GM10248 (cell line): ENCODE measurements at regions of chr2 and their contacts with region 1.

Region 1: GRCh38 chr2:64730551-64731262 is 77.0 kb upstream of the SERTAD2 start:
- DNase-seq: no peak
- CTCF ChIP-seq: no peak

Region 2: DNA sequence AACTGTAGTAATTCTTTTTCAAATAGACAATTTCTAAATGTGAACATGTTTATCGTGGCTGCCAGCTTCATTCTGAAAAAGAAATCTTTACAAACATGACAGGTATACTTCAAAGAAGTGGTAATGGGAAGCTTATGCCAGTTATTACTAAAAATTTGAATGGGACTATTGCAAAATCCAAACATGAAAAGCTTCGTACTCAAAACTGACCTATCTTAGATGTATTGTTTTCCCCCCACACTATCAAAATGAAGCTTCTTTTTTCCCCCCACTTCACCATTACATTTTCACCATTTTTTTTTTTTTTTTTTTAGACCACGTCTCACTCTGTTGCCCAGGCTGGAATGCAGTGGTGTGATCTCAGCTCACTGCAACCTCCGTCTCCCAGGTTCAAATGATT is 26.5 kb before region 1 on chr2:
- CTCF ChIA-PET with region 1: interaction called, 14 read pairs
- POLR2A ChIA-PET with region 1: interaction called, 4 read pairs
- DNase-seq: no peak
- CTCF ChIP-seq: no peak

Region 3: DNA sequence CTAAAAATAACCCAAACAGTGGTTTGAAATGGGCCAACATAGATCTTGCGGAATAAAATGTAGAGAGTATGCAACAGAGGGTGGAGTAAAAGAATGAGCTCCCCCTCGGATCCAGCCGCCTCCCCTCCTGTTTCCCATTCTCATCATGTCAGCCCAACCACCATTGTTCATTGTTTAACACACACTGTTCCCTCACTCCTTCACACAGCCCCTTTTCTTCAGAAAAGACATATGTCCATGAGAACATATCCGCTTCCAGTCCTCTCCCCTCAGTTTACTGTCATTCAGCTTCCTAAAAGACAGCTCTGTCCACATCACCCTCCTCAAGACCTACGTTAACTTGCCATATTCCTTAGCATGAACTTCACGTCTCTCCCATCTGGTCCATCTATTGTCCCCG is 14.1 kb before region 1 on chr2:
- CTCF ChIA-PET with region 1: interaction called, 23 read pairs
- POLR2A ChIA-PET with region 1: no interaction called
- DNase-seq: no peak
- CTCF ChIP-seq: no peak